Activated T-helper 1 cell treated with anti-CD3 and anti-CD28 coated beads, Interleukin-12 subunit alpha, Interleukin-12 subunit beta, Interleukin-2, Interleukin-4 antibody, amounts not matched to agents 30 ng/mL and 10 ng/mL and 1 ng/mL, durations not matched to agents 14 hours and 24 hours and 36 hours (primary cell): ENCODE measurements at regions of chr18 and their contacts with region 1.

Region 1: DNA sequence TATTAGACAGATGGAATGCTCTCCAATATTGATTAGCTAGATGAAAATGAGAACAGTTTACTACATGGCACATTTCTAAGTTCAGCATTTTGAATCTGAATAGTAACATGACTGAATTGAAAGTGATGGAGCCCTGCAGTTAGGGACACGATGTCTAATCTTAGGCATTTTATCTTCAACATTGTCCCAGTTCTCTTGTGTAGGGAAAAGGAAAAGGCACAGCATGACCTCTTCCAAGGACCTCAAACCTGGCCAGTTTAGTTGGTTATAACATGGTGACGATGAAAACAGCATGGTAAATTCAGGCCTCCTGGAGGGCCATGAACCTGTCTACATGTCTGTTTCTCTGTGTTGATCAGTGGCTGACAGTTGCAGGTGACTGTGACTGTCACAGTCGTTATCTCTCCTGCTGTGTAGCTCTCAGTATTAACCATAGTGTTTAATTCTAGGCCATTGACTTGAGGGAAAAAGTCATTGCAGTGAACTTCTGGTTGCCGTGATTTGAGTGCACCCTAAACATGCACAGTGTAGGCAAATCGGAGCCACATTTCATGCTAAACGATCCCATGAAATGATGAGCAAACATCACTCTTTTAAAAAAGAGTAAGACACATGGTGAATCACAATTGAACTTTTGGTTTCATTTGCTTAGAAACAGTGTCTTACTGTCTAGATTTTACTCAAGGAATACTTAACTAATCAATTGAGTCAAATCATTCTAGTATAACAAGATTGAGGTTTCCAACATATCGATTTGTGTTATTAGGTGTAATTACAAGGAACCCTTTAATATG is 129.7 kb downstream of the PHLPP1 start:
- DNase-seq: no peak
- H3K4me3 Mint-ChIP-seq: peak overlapping the region; percentile 70
- H3K27ac Mint-ChIP-seq: peak overlapping the region; percentile 82
- H3K4me1 Mint-ChIP-seq: peaks cover 51% of the 10 kb centered on the region
- H3K27me3 Mint-ChIP-seq: no peaks in the 10 kb centered on the region

Region 2: DNA sequence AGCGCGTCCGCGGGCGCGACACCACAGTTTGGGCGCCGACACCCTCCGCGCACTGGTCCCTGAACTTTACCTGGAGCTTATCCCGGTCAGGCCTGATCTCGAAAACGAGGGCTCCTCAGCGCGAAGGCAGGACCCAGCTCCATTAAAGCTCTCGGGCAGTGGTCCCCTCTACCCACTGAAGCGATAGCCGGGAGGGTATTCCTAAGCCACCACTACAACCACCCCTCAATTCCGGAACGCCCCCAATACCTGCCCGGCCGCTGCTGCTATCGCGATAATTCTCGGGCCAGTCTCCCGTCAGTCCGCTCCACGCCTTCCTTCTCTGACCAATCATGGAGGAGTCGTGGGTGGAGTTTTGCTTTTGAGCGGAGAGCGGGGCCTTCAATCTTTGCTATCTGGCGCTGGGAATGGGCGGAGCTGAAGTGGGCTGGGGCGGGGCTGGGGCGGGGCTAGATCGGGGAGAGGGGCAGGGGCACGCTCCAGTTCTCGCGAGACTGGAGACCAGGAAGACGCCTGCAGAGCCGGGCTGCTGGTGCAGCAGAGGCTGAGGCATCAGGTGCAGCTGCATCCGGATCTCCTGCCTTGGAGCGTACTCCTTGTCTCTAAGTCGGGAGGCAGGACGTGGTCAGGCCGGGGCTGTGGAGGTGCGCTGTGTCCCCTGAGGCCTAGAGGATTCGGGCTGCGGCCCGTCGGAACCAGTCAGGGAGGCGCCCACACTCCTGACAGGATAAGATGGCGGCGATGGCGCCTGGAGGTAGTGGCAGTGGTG is 658.1 kb before region 1 on chr18 and contains the starts of genes PIGN and RELCH:
- intact Hi-C with region 1: loop called (anchors 1 kb)
- DNase-seq: peak; percentile 93
- H3K4me3 Mint-ChIP-seq: peak within 1 kb of the TSS; percentile 99
- H3K27ac Mint-ChIP-seq: peak within 1 kb of the TSS; percentile 96
- H3K4me1 Mint-ChIP-seq: peaks cover 68% of the 10 kb centered on the region
- H3K27me3 Mint-ChIP-seq: no peaks in the 10 kb centered on the region
- total RNA-seq, gene PIGN: 28.5 and 36.1 TPM in 2 replicates
- total RNA-seq, gene RELCH: 32.6 and 34.5 TPM in 2 replicates

Region 3: GRCh38 chr18:62584241-62585120 is 260.6 kb before region 1 on chr18:
- intact Hi-C with region 1: loop called (anchors 2 kb)
- DNase-seq: peak; percentile 75
- H3K4me3 Mint-ChIP-seq: peak overlapping the region; percentile 0
- H3K27ac Mint-ChIP-seq: peak overlapping the region; percentile 61
- H3K4me1 Mint-ChIP-seq: peaks cover 44% of the 10 kb centered on the region
- H3K27me3 Mint-ChIP-seq: no peaks in the 10 kb centered on the region

Region 4: DNA sequence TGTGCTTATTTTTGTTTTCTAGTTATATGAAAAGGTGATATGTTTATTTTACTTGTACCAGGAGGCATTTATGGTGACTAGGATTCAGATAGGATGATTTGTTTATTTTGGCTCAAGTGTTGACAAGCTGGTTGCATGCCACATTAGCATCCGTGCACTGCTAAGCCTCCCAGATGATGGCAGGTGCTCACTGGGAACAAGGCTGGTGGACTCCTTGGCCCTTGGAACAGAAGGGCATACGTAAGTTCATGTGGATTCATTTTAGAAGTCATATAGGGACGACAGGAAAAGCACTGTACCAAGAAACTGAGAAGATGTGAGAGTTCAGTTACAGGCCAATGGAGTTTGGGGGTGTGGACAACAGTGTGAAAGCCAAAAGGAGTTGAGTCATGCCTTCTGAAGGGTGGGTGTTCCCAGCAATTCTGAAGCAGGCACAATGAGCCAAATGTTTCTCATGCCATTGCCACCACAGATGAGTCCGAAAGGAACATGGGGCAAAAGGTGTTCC is 36.5 kb after region 1 on chr18:
- intact Hi-C with region 1: loop called (anchors 5 kb)
- DNase-seq: no peak
- H3K4me3 Mint-ChIP-seq: no peak overlapping the region
- H3K27ac Mint-ChIP-seq: no peak overlapping the region
- H3K4me1 Mint-ChIP-seq: peaks cover 22% of the 10 kb centered on the region
- H3K27me3 Mint-ChIP-seq: no peaks in the 10 kb centered on the region

Region 5: DNA sequence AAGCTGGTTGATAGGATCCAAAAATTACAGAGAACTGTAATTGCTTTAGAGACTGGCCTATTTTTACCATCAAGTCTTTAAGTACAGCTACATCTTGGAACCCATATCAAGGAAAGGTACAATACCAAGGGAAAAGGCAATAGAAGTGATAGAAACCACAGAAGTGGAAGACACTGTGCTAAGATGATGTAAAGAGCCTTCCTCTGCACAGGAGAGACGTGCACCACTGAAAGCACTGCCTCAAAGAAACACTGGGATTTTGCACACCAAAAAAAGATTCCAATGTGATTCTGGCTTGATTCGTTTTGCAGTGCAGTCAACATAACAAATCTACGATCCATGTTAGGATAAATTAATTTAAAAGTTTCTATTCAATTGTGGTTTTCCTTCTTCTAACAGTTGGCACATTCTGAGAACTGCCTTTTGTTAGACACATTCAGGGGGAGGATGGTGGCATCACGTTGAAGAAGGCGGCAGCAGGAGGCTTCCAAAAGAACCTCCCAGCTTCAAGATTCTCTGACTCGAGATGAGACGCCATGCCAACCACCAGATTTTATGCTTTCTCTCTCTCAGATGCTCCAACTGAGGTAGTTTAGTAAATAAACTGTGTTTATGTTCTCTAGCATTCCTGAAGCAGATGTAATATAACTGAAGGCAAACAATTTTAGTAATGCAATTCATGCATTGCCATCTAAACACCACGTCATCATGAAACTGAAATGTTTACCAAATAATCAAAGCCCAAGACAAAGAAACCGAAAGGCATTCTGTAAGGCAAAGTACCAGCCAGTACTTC is 371.7 kb after region 1 on chr18:
- intact Hi-C with region 1: loop called (anchors 2 kb)
- DNase-seq: no peak
- H3K4me3 Mint-ChIP-seq: peak overlapping the region; percentile 67
- H3K27ac Mint-ChIP-seq: peak overlapping the region; percentile 89
- H3K4me1 Mint-ChIP-seq: peaks cover 94% of the 10 kb centered on the region
- H3K27me3 Mint-ChIP-seq: no peaks in the 10 kb centered on the region

Region 6: DNA sequence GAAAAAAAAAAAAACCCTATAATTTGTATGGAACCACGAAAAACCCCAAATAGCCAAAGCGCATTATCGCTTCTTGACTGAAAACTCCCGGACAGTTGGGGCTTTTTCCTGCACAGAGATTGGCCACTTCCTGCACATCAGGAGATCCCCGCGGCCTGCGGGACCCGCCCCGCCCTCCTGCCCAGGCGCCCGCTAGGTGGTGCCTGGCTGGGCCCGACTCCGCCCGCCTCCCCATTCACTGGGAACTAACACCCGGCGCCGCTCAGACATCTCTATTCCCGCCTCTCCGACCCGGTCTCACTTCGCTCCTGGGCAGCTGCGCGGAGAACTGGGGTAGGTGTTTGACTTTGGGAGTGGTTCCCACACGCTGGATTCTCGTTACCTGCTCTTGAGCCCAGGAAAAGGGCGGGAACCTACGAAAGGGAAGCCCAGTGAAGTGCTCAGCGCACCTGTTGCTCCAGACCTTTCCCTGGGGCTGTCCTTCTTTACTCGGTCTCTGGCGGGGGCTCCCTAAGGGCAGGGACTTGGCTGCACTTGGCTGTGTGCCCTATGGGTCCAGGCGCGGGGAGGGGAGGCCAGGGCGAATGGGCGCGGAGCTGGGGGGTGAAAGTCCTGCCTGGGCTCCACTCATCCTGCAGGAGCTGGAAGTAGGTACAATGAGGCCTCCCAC is 1104.2 kb after region 1 on chr18 and contains the start of gene HMSD:
- intact Hi-C with region 1: loop called (anchors 5 kb)
- DNase-seq: peak; percentile 68
- H3K4me3 Mint-ChIP-seq: peak within 1 kb of the TSS; percentile 88
- H3K27ac Mint-ChIP-seq: peak within 1 kb of the TSS; percentile 87
- H3K4me1 Mint-ChIP-seq: peaks cover 46% of the 10 kb centered on the region
- H3K27me3 Mint-ChIP-seq: peaks cover 5% of the 10 kb centered on the region
- total RNA-seq, gene HMSD: 19.7 and 27.8 TPM in 2 replicates